Activated T-helper 1 cell treated with anti-CD3 and anti-CD28 coated beads, Interleukin-12 subunit alpha, Interleukin-12 subunit beta, Interleukin-2, Interleukin-4 antibody, amounts not matched to agents 30 ng/mL and 10 ng/mL and 1 ng/mL, durations not matched to agents 14 hours and 24 hours and 36 hours (primary cell): ENCODE measurements at regions of chr12 and their contacts with region 1.

Region 1: GRCh38 chr12:25052196-25052913 is 103.5 kb upstream of the BCAT1 start:
- DNase-seq: peak; percentile 43
- H3K4me3 Mint-ChIP-seq: peak overlapping the region; percentile 92
- H3K27ac Mint-ChIP-seq: peak overlapping the region; percentile 99
- H3K4me1 Mint-ChIP-seq: peaks cover 56% of the 10 kb centered on the region
- H3K27me3 Mint-ChIP-seq: peaks cover 4% of the 10 kb centered on the region

Region 2: DNA sequence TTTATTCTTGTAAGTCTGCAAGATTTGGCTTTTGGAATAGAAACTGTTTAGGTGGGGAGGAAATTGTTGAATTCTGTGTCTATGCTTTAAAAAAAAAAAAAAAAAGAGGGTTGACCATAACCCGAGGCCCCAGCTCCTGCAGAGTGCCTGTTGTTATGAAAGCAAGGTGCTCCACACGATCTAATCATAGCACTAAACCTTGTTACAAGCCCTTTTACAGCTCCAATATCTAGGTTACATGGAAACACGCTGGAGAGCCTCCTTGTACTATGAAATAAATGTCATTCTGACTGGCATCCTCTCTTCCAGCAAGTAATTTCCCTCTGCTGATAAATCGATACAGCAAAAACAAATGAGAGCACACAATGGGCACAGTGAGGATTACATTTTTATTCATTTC is 799.8 kb before region 1 on chr12:
- intact Hi-C with region 1: no loop called
- DNase-seq: no peak
- H3K4me3 Mint-ChIP-seq: no peak overlapping the region
- H3K27ac Mint-ChIP-seq: no peak overlapping the region
- H3K4me1 Mint-ChIP-seq: no peaks in the 10 kb centered on the region
- H3K27me3 Mint-ChIP-seq: no peaks in the 10 kb centered on the region

Region 3: GRCh38 chr12:24822121-24822899 is 230.0 kb before region 1 on chr12:
- intact Hi-C with region 1: loop called (anchors 5 kb)
- DNase-seq: no peak
- H3K4me3 Mint-ChIP-seq: peak overlapping the region; percentile 48
- H3K27ac Mint-ChIP-seq: peak overlapping the region; percentile 91
- H3K4me1 Mint-ChIP-seq: peaks cover 29% of the 10 kb centered on the region
- H3K27me3 Mint-ChIP-seq: no peaks in the 10 kb centered on the region

Region 4: GRCh38 chr12:24833513-24833912 is 218.8 kb before region 1 on chr12:
- intact Hi-C with region 1: no loop called
- DNase-seq: no peak
- H3K4me3 Mint-ChIP-seq: no peak overlapping the region
- H3K27ac Mint-ChIP-seq: no peak overlapping the region
- H3K4me1 Mint-ChIP-seq: peaks cover 24% of the 10 kb centered on the region
- H3K27me3 Mint-ChIP-seq: no peaks in the 10 kb centered on the region

Region 5: GRCh38 chr12:24991209-24992049 is 60.9 kb before region 1 on chr12:
- intact Hi-C with region 1: loop called (anchors 2 kb)
- DNase-seq: no peak
- H3K4me3 Mint-ChIP-seq: no peak overlapping the region
- H3K27ac Mint-ChIP-seq: no peak overlapping the region
- H3K4me1 Mint-ChIP-seq: no peaks in the 10 kb centered on the region
- H3K27me3 Mint-ChIP-seq: no peaks in the 10 kb centered on the region

Region 6: GRCh38 chr12:25041006-25041741 is 11.2 kb before region 1 on chr12:
- intact Hi-C with region 1: no loop called
- DNase-seq: no peak
- H3K4me3 Mint-ChIP-seq: no peak overlapping the region
- H3K27ac Mint-ChIP-seq: no peak overlapping the region
- H3K4me1 Mint-ChIP-seq: peaks cover 10% of the 10 kb centered on the region
- H3K27me3 Mint-ChIP-seq: peaks cover 14% of the 10 kb centered on the region

Region 7: DNA sequence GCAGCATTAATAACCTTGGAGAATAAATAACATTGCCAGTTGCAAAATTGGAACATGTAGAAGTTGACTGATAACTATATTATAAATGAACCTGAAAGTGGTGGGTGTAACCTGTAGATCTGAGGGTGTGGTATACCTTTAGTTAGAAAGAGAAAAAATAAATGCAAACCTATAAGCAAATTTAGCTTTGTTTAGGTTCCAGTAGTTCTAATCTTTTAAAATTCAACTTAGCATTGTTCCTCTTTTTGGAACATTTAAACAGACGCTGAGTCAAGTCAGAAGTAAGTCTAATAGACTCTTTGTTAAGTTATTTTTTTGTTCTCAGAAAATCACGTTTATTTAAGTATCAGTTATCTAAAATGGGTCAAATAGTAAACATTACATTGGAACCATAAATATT is 22.6 kb after region 1 on chr12:
- intact Hi-C with region 1: no loop called
- DNase-seq: no peak
- H3K4me3 Mint-ChIP-seq: no peak overlapping the region
- H3K27ac Mint-ChIP-seq: no peak overlapping the region
- H3K4me1 Mint-ChIP-seq: peaks cover 13% of the 10 kb centered on the region
- H3K27me3 Mint-ChIP-seq: no peaks in the 10 kb centered on the region

Region 8: GRCh38 chr12:25130741-25131188 is 78.4 kb after region 1 on chr12:
- intact Hi-C with region 1: loop called (anchors 2 kb)
- DNase-seq: no peak
- H3K4me3 Mint-ChIP-seq: no peak overlapping the region
- H3K27ac Mint-ChIP-seq: no peak overlapping the region
- H3K4me1 Mint-ChIP-seq: no peaks in the 10 kb centered on the region
- H3K27me3 Mint-ChIP-seq: peaks cover 3% of the 10 kb centered on the region

Region 9: GRCh38 chr12:25328072-25328712 is 275.8 kb after region 1 on chr12:
- intact Hi-C with region 1: loop called (anchors 5 kb)
- DNase-seq: no peak
- H3K4me3 Mint-ChIP-seq: no peak overlapping the region
- H3K27ac Mint-ChIP-seq: no peak overlapping the region
- H3K4me1 Mint-ChIP-seq: peaks cover 18% of the 10 kb centered on the region
- H3K27me3 Mint-ChIP-seq: peaks cover 11% of the 10 kb centered on the region

Region 10: GRCh38 chr12:25591144-25591543 is 538.8 kb after region 1 on chr12:
- intact Hi-C with region 1: loop called (anchors 10 kb)
- DNase-seq: no peak
- H3K4me3 Mint-ChIP-seq: no peak overlapping the region
- H3K27ac Mint-ChIP-seq: peak overlapping the region; percentile 24
- H3K4me1 Mint-ChIP-seq: peaks cover 58% of the 10 kb centered on the region
- H3K27me3 Mint-ChIP-seq: no peaks in the 10 kb centered on the region